Adrenal gland (tissue), 19 donors: ENCODE measurements at regions of chr9 and their contacts with region 1.

Region 1: GRCh38 chr9:70484210-70485130 is 70.0 kb upstream of the KLF9 start:
- DNase-seq: peak; percentile 43 to 82 (median 58)
- H3K4me3 ChIP-seq: no peak overlapping the region
- H3K27ac ChIP-seq: peak overlapping the region; percentile 37 to 90 (median 82)
- H3K4me1 ChIP-seq: peaks cover 11 to 78% of the 10 kb centered on the region in 2 donors
- H3K27me3 ChIP-seq: no peaks in the 10 kb centered on the region
- CTCF ChIP-seq: peak; percentile 76 to 92 (median 84)
- POLR2A ChIP-seq: no peak

Region 2: DNA sequence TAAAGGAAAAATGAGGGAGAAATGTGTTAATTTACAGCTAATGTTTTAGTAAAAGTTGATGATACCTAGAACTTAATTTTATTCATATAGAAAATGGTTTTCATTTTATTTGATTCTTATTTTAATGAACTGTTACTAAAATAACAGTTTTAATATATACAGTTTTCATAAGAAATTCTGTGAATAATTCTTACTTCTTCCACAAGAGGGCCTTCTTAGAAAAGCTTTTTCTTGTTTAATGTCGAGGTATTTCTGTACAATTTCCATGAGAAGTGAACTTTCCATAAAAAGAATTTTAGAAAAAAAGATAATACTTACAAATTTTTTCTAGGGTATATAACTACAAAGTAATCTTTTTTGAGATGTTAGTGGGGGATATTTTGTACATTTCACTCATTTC is 143.9 kb before region 1 on chr9:
- intact Hi-C with region 1: loop called (anchors 10 kb)
- DNase-seq: no peak
- H3K4me3 ChIP-seq: no peak overlapping the region
- H3K27ac ChIP-seq: no peak overlapping the region
- H3K4me1 ChIP-seq: peaks cover 0 to 8% of the 10 kb centered on the region in 2 donors
- H3K27me3 ChIP-seq: no peaks in the 10 kb centered on the region
- CTCF ChIP-seq: peak; percentile 45 to 81 (median 65)
- POLR2A ChIP-seq: no peak

Region 3: GRCh38 chr9:70413798-70414775 is 70.4 kb before region 1 on chr9 and contains the start of gene KLF9:
- intact Hi-C with region 1: loop called in 1 of 2 experiments (anchors 5 kb)
- DNase-seq: peak; percentile 94 to 99 (median 98)
- H3K4me3 ChIP-seq: peak within 1 kb of the TSS; percentile 66 to 99 (median 87)
- H3K27ac ChIP-seq: peak within 1 kb of the TSS; percentile 99 to 100 (median 99)
- H3K4me1 ChIP-seq: peaks cover 41 to 61% of the 10 kb centered on the region in 2 donors
- H3K27me3 ChIP-seq: no peaks in the 10 kb centered on the region
- CTCF ChIP-seq: no peak
- POLR2A ChIP-seq: peak; percentile 84 to 98
- total RNA-seq, gene KLF9: 2.2 to 80.7 (median 44.3) TPM

Region 4: GRCh38 chr9:70419546-70420266 is 64.8 kb before region 1 on chr9:
- intact Hi-C with region 1: loop called (anchors 5 kb)
- DNase-seq: peak; percentile 95 to 99 (median 98)
- H3K4me3 ChIP-seq: peak overlapping the region in 3 of 4 donors; percentile 18 to 71 (median 70)
- H3K27ac ChIP-seq: peak overlapping the region; percentile 99 to 100 (median 100)
- H3K4me1 ChIP-seq: peaks cover 37 to 58% of the 10 kb centered on the region in 2 donors
- H3K27me3 ChIP-seq: no peaks in the 10 kb centered on the region
- CTCF ChIP-seq: peak in 3 of 6 experiments; percentile 1 to 38 (median 16)
- POLR2A ChIP-seq: peak; percentile 92 to 98